CD14-positive monocyte (primary cell): ENCODE measurements at regions of chr3 and their contacts with region 1.

Region 1: GRCh38 chr3:56801662-56802377 is at the start of gene ARHGEF3:
- DNase-seq: peak; percentile 69 to 75 (median 75)
- H3K4me3 ChIP-seq: peak within 1 kb of the TSS; percentile 56 to 95 (median 93)
- H3K4me3 Mint-ChIP-seq: peak within 1 kb of the TSS; percentile 99 to 100
- H3K27ac ChIP-seq: peak within 1 kb of the TSS; percentile 36 to 85
- H3K27ac Mint-ChIP-seq: peak within 1 kb of the TSS; percentile 84 to 93 (median 88)
- H3K4me1 ChIP-seq: peaks cover 35 to 54% of the 10 kb centered on the region in 2 donors
- H3K4me1 Mint-ChIP-seq: peaks cover 41% of the 10 kb centered on the region
- H3K27me3 ChIP-seq: no peaks in the 10 kb centered on the region
- H3K27me3 Mint-ChIP-seq: peaks cover 0 to 2% (median 2%) of the 10 kb centered on the region in 3 donors
- CTCF ChIP-seq: peak; percentile 25
- polyA plus RNA-seq, gene ARHGEF3: 22.6 to 29.5 (median 26.5) TPM

Region 2: GRCh38 chr3:56556908-56557830 is 244.7 kb before region 1 on chr3 and contains the start of gene CCDC66:
- intact Hi-C with region 1: loop called in 1 of 2 experiments (anchors 10 kb)
- DNase-seq: peak; percentile 88 to 92 (median 91)
- H3K4me3 ChIP-seq: peak within 1 kb of the TSS; percentile 69 to 90 (median 87)
- H3K4me3 Mint-ChIP-seq: peak within 1 kb of the TSS; percentile 96 to 99
- H3K27ac ChIP-seq: peak within 1 kb of the TSS; percentile 50 to 95
- H3K27ac Mint-ChIP-seq: peak within 1 kb of the TSS; percentile 95 to 100 (median 97)
- H3K4me1 ChIP-seq: peaks cover 7 to 17% of the 10 kb centered on the region in 2 donors
- H3K4me1 Mint-ChIP-seq: peaks cover 10% of the 10 kb centered on the region
- H3K27me3 ChIP-seq: peaks cover 2 to 7% of the 10 kb centered on the region in 2 donors
- H3K27me3 Mint-ChIP-seq: peaks cover 13 to 16% (median 14%) of the 10 kb centered on the region in 3 donors
- CTCF ChIP-seq: peak; percentile 81
- polyA plus RNA-seq, gene CCDC66: 4.4 to 6.8 (median 4.7) TPM

Region 3: DNA sequence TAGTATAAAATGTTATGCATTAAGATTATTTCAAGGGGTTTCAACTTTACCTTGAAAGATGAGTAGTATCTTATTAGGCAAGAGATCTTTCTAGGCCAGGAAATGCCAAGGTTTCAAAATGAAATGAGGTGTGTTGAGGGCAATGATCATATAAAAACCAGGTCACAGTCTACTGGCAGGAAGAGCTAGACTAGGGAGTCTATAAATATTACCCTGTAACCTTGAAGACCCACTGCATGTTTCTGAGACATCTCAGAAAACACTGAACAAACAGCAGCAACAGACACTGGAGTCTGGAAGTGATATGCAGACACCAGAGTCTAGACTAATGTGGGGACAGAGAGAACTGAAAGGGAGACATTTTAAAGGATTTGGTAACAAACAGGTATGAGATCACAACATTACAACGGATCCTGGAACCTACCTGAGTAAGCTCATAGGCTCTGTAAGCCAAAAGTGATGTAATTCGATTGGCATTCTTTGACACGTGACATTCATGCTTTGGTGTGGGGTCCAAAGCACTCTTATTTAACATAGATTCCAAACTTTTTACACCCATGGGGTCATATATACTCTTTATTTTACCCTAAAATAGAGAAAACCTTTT is 133.7 kb before region 1 on chr3:
- intact Hi-C with region 1: no loop called
- DNase-seq: no peak
- H3K4me3 ChIP-seq: no peak overlapping the region
- H3K4me3 Mint-ChIP-seq: no peak overlapping the region
- H3K27ac ChIP-seq: no peak overlapping the region
- H3K27ac Mint-ChIP-seq: no peak overlapping the region
- H3K4me1 ChIP-seq: no peaks in the 10 kb centered on the region
- H3K4me1 Mint-ChIP-seq: no peaks in the 10 kb centered on the region
- H3K27me3 ChIP-seq: no peaks in the 10 kb centered on the region
- H3K27me3 Mint-ChIP-seq: no peaks in the 10 kb centered on the region
- CTCF ChIP-seq: no peak

Region 4: DNA sequence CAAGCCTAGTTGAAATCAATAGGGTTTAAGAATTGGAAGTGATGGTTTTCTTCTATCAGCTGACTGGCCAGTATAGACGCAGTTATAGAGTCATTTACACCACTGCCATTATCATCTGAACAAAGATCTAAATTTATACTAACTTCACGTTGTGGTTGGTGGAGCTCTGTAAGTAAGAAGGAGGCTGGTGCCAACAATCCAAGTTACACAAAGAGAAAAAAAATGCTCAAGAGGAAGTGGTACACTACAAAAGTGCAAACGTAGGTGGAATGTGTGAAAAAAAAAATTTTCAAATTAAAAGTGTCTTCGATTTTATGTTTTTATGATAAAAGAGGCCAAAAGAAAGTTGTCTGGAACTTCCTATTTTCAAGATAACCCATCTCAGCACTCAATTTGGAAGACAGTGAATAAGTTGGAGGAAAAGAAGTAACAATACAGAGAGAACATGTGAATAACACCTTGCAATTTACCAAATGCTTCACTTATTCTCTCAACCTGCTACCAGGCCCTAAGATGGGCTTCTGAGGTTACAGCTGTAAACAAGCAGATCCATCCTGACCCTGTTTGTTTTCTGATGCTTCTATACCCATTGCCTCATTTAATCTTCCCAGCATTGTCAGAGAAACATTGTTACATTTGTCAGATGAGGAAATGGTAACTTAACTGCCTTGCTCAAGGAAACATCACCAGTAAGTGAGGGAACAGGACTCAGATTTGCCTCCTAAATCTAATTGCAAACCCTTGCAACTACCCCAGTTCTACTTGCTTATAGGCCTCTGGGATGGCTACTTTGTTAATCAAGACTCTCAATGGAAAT is 106.7 kb before region 1 on chr3:
- intact Hi-C with region 1: loop called in 1 of 2 experiments (anchors 5 kb)
- DNase-seq: peak in 1 of 3 donors; percentile 21
- H3K4me3 ChIP-seq: no peak overlapping the region
- H3K4me3 Mint-ChIP-seq: peak overlapping the region in 1 of 2 donors; percentile 13
- H3K27ac ChIP-seq: peak overlapping the region in 1 of 2 donors; percentile 68
- H3K27ac Mint-ChIP-seq: peak overlapping the region; percentile 3 to 81 (median 56)
- H3K4me1 ChIP-seq: peaks cover 36 to 48% of the 10 kb centered on the region in 2 donors
- H3K4me1 Mint-ChIP-seq: peaks cover 45% of the 10 kb centered on the region
- H3K27me3 ChIP-seq: no peaks in the 10 kb centered on the region
- H3K27me3 Mint-ChIP-seq: no peaks in the 10 kb centered on the region
- CTCF ChIP-seq: no peak

Region 5: DNA sequence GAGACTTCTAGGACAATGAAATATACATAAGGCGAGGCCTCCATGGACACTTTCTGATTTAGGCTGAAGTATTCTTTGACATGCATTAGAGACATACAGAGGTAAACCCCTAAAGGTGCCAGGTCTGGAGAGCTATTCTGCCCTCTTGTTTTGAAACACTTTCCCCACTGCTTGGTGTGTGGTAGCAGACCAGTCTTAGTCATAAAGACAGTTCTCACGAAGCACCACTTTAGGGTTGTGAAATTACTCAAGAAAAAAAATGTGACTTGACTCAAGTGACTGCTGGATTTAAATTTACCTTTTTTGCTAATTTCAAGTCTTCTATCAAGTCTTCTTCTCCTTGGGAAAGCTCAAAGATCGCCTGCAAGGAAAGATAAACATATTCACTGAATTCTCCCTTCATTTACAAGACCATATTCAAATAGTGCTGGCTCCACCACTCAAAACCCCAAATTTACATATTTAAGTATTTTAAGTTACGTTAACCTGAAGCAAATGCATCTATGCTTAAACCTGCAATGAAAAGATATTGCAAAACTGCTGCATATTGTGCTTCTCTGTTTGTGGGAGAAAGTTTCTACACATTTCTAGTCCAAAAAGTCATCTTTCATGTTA is 48.5 kb before region 1 on chr3:
- intact Hi-C with region 1: loop called (anchors 2 to 5 kb)
- DNase-seq: peak; percentile 72 to 86 (median 72)
- H3K4me3 ChIP-seq: peak overlapping the region in 1 of 3 experiments; percentile 85
- H3K4me3 Mint-ChIP-seq: peak overlapping the region in 1 of 2 donors; percentile 96
- H3K27ac ChIP-seq: peak overlapping the region in 1 of 2 donors; percentile 96
- H3K27ac Mint-ChIP-seq: peak overlapping the region; percentile 98 to 100 (median 99)
- H3K4me1 ChIP-seq: peaks cover 59 to 78% of the 10 kb centered on the region in 2 donors
- H3K4me1 Mint-ChIP-seq: peaks cover 75% of the 10 kb centered on the region
- H3K27me3 ChIP-seq: no peaks in the 10 kb centered on the region
- H3K27me3 Mint-ChIP-seq: no peaks in the 10 kb centered on the region
- CTCF ChIP-seq: no peak

Region 6: GRCh38 chr3:56775838-56776555 is 25.8 kb before region 1 on chr3:
- intact Hi-C with region 1: no loop called
- DNase-seq: no peak
- H3K4me3 ChIP-seq: peak overlapping the region in 1 of 3 experiments; percentile 13
- H3K4me3 Mint-ChIP-seq: peak overlapping the region; percentile 62 to 78
- H3K27ac ChIP-seq: peak overlapping the region; percentile 27 to 48
- H3K27ac Mint-ChIP-seq: peak overlapping the region; percentile 61 to 94 (median 86)
- H3K4me1 ChIP-seq: peaks cover 56 to 66% of the 10 kb centered on the region in 2 donors
- H3K4me1 Mint-ChIP-seq: peaks cover 68% of the 10 kb centered on the region
- H3K27me3 ChIP-seq: no peaks in the 10 kb centered on the region
- H3K27me3 Mint-ChIP-seq: peaks cover 0 to 4% (median 0%) of the 10 kb centered on the region in 3 donors
- CTCF ChIP-seq: no peak

Region 7: DNA sequence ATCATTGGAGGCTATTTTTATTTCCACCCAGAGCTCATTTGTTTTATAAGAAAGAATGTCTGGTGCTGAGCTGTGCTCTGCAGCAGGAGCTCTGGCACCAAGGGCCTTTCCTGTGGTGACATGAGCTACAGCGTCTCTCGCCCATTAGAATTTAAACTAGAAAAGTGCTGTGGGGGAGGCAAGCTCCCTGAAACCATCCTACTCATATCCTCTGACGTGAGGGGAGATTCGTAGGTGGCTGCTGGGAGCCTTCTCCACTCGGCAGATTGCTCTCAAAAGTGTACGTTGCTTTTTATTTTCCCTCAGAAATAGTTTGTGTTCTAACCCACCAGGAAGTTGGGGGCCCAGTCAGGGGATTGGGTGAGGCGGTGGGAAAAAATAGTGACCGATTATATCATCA is 76.3 kb after region 1 on chr3:
- intact Hi-C with region 1: no loop called
- DNase-seq: no peak
- H3K4me3 ChIP-seq: no peak overlapping the region
- H3K4me3 Mint-ChIP-seq: no peak overlapping the region
- H3K27ac ChIP-seq: no peak overlapping the region
- H3K27ac Mint-ChIP-seq: no peak overlapping the region
- H3K4me1 ChIP-seq: no peaks in the 10 kb centered on the region
- H3K4me1 Mint-ChIP-seq: peaks cover 5% of the 10 kb centered on the region
- H3K27me3 ChIP-seq: no peaks in the 10 kb centered on the region
- H3K27me3 Mint-ChIP-seq: peaks cover 0 to 2% (median 0%) of the 10 kb centered on the region in 3 donors
- CTCF ChIP-seq: no peak

Region 8: GRCh38 chr3:56988458-56989168 is 186.8 kb after region 1 on chr3:
- intact Hi-C with region 1: loop called (anchors 2 to 5 kb)
- DNase-seq: peak; percentile 47 to 72 (median 69)
- H3K4me3 ChIP-seq: no peak overlapping the region
- H3K4me3 Mint-ChIP-seq: peak overlapping the region in 1 of 2 donors; percentile 63
- H3K27ac ChIP-seq: no peak overlapping the region
- H3K27ac Mint-ChIP-seq: no peak overlapping the region
- H3K4me1 ChIP-seq: peaks cover 0 to 10% of the 10 kb centered on the region in 2 donors
- H3K4me1 Mint-ChIP-seq: peaks cover 15% of the 10 kb centered on the region
- H3K27me3 ChIP-seq: no peaks in the 10 kb centered on the region
- H3K27me3 Mint-ChIP-seq: peaks cover 6 to 8% (median 7%) of the 10 kb centered on the region in 3 donors
- CTCF ChIP-seq: peak; percentile 92